Activated CD4-positive, alpha-beta T cell treated with anti-CD3 and anti-CD28 coated beads, Interleukin-2, amount 10 ng/mL, durations not matched to agents 24 days and 14 days (primary cell): ENCODE measurements at regions of chr3 and their contacts with region 1.

Region 1: GRCh38 chr3:23805633-23806533 is at the start of gene UBE2E1:
- DNase-seq: peak; percentile 90
- H3K4me3 Mint-ChIP-seq: peak within 1 kb of the TSS; percentile 91
- H3K27ac Mint-ChIP-seq: peak within 1 kb of the TSS; percentile 93
- H3K4me1 Mint-ChIP-seq: peaks cover 35% of the 10 kb centered on the region
- H3K27me3 Mint-ChIP-seq: peaks cover 26% of the 10 kb centered on the region
- total RNA-seq, gene UBE2E1: 72.6 and 79.5 TPM in 2 replicates

Region 2: DNA sequence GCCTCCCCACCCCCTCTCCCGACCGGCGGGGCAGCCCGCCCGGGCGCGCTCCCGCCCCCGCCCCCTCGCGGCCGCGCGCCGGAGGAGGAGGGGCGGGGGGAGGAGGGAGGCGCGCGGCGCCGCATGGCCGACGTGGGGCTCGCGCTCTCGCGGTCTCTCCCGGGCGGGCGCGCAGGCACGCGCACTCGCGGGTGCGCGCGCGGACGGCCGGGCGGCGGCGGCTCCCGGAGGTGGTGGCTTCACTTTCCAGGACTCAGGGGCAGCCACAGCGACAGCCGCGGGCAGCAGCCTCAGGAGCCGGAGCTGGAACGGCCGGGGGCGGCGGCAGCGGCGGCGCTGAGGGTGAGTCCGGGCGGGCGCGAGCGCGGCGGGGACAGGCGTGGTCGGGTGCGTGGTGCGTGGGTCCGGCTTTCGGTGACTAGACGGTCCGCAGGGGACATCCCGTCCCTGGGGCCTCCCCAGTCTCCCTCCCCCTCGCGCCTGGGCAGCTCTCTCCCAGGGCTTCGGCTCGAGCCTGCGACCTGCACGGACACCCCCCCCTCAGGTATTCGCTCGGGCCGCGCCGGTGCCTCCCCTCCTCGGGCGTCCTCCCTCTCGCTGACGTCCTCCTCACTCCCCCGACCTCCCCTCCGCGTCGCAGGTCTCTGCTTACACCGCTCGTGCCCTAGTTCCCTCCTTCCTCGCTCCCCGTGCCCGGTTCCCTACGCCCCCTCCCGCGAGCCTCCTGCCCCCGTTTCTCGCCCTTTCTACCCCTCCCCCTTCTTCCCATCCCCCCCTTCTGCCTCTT is 602.8 kb before region 1 on chr3 and contains the start of gene UBE2E2:
- intact Hi-C with region 1: loop called (anchors 5 kb)
- DNase-seq: peak; percentile 86
- H3K4me3 Mint-ChIP-seq: peak within 1 kb of the TSS; percentile 95
- H3K27ac Mint-ChIP-seq: peak within 1 kb of the TSS; percentile 93
- H3K4me1 Mint-ChIP-seq: peaks cover 24% of the 10 kb centered on the region
- H3K27me3 Mint-ChIP-seq: peaks cover 48% of the 10 kb centered on the region
- total RNA-seq, gene UBE2E2: 8.0 and 13.8 TPM in 2 replicates

Region 3: GRCh38 chr3:23740517-23740965 is 65.3 kb before region 1 on chr3:
- intact Hi-C with region 1: loop called (anchors 2 kb)
- DNase-seq: peak; percentile 75
- H3K4me3 Mint-ChIP-seq: peak overlapping the region; percentile 4
- H3K27ac Mint-ChIP-seq: peak overlapping the region; percentile 68
- H3K4me1 Mint-ChIP-seq: peaks cover 10% of the 10 kb centered on the region
- H3K27me3 Mint-ChIP-seq: peaks cover 25% of the 10 kb centered on the region

Region 4: DNA sequence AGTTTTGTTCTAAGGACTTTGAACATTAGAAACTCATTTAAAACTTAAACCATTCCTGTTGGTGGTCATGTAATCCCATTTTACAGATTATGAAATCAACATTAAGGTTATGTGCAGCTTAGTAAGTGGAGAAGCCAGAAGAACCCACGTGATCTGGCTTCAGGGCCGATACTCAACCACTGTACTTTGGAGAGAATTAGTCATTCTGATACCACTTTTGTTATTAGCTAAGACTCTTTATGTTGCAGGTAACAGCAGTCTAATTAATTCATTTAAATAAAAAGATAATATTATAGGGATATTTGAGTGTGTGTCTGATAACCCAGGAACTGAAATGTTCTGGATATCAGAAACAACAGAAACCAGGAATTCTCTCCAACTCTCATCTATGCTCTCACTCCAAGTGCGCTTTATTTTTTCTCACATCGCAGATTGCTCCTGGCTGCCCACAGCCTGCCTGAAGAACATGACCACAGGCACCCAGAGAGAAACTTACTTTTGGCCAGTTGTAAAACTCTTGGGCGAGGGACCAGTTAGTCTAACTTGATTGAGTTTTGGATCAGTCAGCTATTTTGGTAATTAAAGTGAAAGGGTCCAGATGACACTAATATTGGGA is 25.1 kb after region 1 on chr3:
- intact Hi-C with region 1: loop called (anchors 2 kb)
- DNase-seq: no peak
- H3K4me3 Mint-ChIP-seq: no peak overlapping the region
- H3K27ac Mint-ChIP-seq: no peak overlapping the region
- H3K4me1 Mint-ChIP-seq: peaks cover 18% of the 10 kb centered on the region
- H3K27me3 Mint-ChIP-seq: no peaks in the 10 kb centered on the region

Region 5: GRCh38 chr3:23945903-23946751 is 140.2 kb after region 1 on chr3:
- intact Hi-C with region 1: loop called (anchors 1 kb)
- DNase-seq: peak; percentile 97
- H3K4me3 Mint-ChIP-seq: peak overlapping the region; percentile 85
- H3K27ac Mint-ChIP-seq: peak overlapping the region; percentile 87
- H3K4me1 Mint-ChIP-seq: peaks cover 26% of the 10 kb centered on the region
- H3K27me3 Mint-ChIP-seq: peaks cover 33% of the 10 kb centered on the region